IMR-90 (cell line): ENCODE measurements at regions of chr12 and their contacts with region 1.

Region 1: GRCh38 chr12:114476159-114476558 is 70.2 kb upstream of the TBX5 start:
- DNase-seq: peak; percentile 66
- ATAC-seq: peak; percentile 64
- H3K4me3 ChIP-seq: no peak overlapping the region
- H3K27ac ChIP-seq: no peak overlapping the region
- H3K4me1 ChIP-seq: no peaks in the 10 kb centered on the region; the same call in 1 of the 2 replicates
- H3K27me3 ChIP-seq: peaks cover 19% of the 10 kb centered on the region
- CTCF ChIP-seq: peak; percentile 71
- POLR2A ChIP-seq: no peak
- RAD21 ChIP-seq: peak; percentile 68

Region 2: GRCh38 chr12:113965951-113966797 is 510.0 kb before region 1 on chr12 and contains the start of gene RBM19:
- CTCF ChIA-PET with region 1: no interaction called
- POLR2A ChIA-PET with region 1: no interaction called
- dilution Hi-C with region 1: no loop called
- in situ Hi-C with region 1: no loop called
- intact Hi-C with region 1: loop called (anchors 1 kb)
- DNase-seq: peak; percentile 97
- ATAC-seq: peak; percentile 100
- H3K4me3 ChIP-seq: peak within 1 kb of the TSS; percentile 60
- H3K27ac ChIP-seq: peak within 1 kb of the TSS; percentile 63
- H3K4me1 ChIP-seq: no peaks in the 10 kb centered on the region
- H3K27me3 ChIP-seq: peaks cover 5% of the 10 kb centered on the region; the same call in 1 of the 2 replicates
- CTCF ChIP-seq: peak; percentile 95
- POLR2A ChIP-seq: peak; percentile 80; the same call in 1 of the 2 replicates
- RAD21 ChIP-seq: peak; percentile 62
- total RNA-seq, gene RBM19: 18.3 and 19.2 TPM in 2 replicates

Region 3: GRCh38 chr12:114440270-114441038 is 35.7 kb before region 1 on chr12:
- CTCF ChIA-PET with region 1: no interaction called
- POLR2A ChIA-PET with region 1: no interaction called
- dilution Hi-C with region 1: no loop called
- in situ Hi-C with region 1: no loop called
- intact Hi-C with region 1: no loop called
- DNase-seq: no peak
- ATAC-seq: no peak
- H3K4me3 ChIP-seq: no peak overlapping the region
- H3K27ac ChIP-seq: no peak overlapping the region
- H3K4me1 ChIP-seq: no peaks in the 10 kb centered on the region
- H3K27me3 ChIP-seq: peaks cover 64% of the 10 kb centered on the region
- CTCF ChIP-seq: no peak
- POLR2A ChIP-seq: no peak
- RAD21 ChIP-seq: no peak

Region 4: DNA sequence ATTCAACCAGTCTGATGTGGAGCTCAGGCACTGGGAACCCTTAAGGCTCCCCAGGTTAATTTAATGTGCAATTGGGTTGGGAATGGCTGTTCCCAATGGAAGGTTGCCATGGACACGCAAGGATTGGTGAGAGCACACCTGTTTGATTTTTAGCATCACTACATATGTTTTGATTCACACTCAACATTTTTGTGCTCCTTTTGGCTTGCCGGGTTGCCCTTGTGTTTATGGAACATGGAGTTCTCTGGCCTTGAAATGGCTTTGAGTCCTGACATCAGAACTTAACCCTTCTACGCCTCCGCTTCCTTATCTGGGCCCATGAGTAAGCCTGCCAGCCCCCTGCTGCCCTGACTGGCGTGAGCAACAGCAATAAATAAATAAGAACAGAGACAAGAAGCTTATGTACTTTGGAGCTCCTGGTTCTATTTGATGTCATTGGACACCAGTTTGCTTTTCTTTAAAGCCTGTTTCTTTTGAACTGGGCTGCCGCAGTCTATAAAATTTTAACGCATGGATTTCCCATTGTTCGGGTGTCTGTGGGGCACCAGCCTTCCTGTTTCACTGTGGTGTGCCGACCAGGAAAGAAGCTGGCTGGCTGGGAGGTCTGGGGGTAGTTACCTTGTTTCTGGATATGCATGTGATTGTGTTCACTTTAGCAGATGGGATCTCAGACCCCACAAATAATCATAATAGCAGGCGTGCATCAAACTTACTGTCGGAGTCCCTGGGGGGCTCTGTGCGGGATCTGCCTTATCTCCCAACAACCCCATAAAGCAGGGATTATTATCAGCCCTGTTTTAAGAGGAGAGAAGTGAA is 180.0 kb after region 1 on chr12:
- CTCF ChIA-PET with region 1: no interaction called
- POLR2A ChIA-PET with region 1: interaction called, 16 read pairs
- dilution Hi-C with region 1: no loop called
- in situ Hi-C with region 1: no loop called
- intact Hi-C with region 1: no loop called
- DNase-seq: peak; percentile 93
- ATAC-seq: peak; percentile 91
- H3K4me3 ChIP-seq: no peak overlapping the region
- H3K27ac ChIP-seq: peak overlapping the region; percentile 48
- H3K4me1 ChIP-seq: peaks cover 4% of the 10 kb centered on the region; the same call in 1 of the 2 replicates
- H3K27me3 ChIP-seq: no peaks in the 10 kb centered on the region
- CTCF ChIP-seq: 0 out of 2 replicates have a peak, but pooled peaks have one; percentile 1
- POLR2A ChIP-seq: peak; percentile 45; the same call in 1 of the 2 replicates
- RAD21 ChIP-seq: no peak